ENCODE measurements at regions of chr20 and their contacts with region 1.

Region 1: DNA sequence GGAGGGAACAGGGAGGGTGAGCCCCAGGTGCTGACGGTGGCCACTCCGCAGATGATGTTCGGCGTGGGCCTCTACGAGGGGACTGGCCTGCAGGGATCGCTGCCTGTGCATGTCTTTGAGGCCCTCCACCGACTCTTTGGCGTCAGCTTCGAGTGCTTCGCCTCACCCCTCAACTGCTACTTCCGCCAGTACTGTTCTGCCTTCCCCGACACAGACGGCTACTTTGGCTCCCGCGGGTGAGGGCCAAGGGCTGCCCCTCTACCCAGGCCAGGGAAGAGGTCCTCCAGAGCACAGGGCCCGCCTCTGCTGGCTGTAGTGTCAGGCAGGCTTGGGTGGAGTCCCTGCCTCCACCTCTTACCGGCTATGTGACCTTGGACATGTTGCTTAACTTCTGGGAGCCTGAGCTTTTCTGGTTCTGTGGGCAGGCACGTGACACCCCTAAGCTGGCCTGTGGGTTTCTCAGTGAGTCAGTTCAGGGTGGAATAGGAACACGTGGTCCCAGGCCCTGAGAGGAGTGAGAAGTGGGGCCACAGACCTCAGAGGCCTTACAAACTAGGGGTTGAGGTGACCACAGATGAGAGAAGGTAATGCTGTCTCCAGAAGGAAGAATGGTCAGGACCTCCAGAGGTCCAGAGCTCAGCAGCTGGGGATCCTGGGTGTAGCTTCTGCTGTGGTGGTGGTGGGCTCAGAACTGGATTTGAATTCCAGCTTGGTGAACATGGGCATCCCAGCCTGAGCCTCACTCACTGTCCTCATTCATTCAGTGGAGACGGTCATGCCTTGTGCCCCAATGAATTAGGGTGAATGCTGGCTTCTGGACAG is 11.9 kb downstream of the PCIF1 start:
- DNase-seq: peak in 2 of 10 donors; percentile 31 to 45
- ATAC-seq: no peak
- H3K4me3 Mint-ChIP-seq: no peak overlapping the region
- H3K27ac Mint-ChIP-seq: peak overlapping the region in 6 of 10 donors; percentile 34 to 84 (median 58)
- H3K4me1 Mint-ChIP-seq: peaks cover 0 to 28% (median 2%) of the 10 kb centered on the region in 4 donors
- H3K27me3 Mint-ChIP-seq: no peaks in the 10 kb centered on the region

Region 2: GRCh38 chr20:45959956-45960630 is 13.7 kb after region 1 on chr20:
- POLR2A ChIA-PET with region 1: interaction called, 138 read pairs
- DNase-seq: no peak
- ATAC-seq: no peak
- H3K4me3 Mint-ChIP-seq: no peak overlapping the region
- H3K27ac Mint-ChIP-seq: peak overlapping the region in 1 of 10 donors; percentile 38
- H3K4me1 Mint-ChIP-seq: peaks cover 0 to 4% (median under 1%) of the 10 kb centered on the region in 4 donors
- H3K27me3 Mint-ChIP-seq: no peaks in the 10 kb centered on the region